Activated naive CD4-positive, alpha-beta T cell treated with anti-CD3 and anti-CD28 coated beads for 36 hours (primary cell): ENCODE measurements at regions of chr7 and their contacts with region 1.

Region 1: DNA sequence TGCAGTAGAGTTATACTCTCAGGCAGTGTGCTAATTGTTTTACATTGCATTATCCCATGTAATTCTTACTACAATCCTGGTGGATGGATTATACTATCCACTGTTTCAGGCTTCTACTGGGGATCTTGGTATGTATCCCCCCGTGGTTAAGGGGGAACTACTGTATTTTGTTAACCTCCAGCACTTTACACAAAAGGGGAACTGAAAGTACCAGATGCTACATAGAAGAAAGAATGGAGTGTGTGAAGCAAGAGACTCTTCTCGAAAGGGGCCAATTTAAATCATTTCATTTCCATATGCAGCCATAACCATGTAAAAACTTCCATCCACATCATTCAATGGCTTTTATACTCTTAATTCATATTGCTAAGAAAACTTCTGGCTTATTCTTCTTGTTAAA is 69.4 kb downstream of the C1GALT1 start:
- DNase-seq: no peak
- H3K4me3 Mint-ChIP-seq: no peak overlapping the region
- H3K27ac Mint-ChIP-seq: no peak overlapping the region
- H3K4me1 Mint-ChIP-seq: peaks cover 10% of the 10 kb centered on the region
- H3K27me3 Mint-ChIP-seq: no peaks in the 10 kb centered on the region

Region 2: GRCh38 chr7:7219216-7219615 is 32.5 kb before region 1 on chr7:
- CTCF ChIA-PET with region 1: interaction called, 3 read pairs
- intact Hi-C with region 1: loop called (anchors 5 kb)
- DNase-seq: no peak
- H3K4me3 Mint-ChIP-seq: no peak overlapping the region
- H3K27ac Mint-ChIP-seq: no peak overlapping the region
- H3K4me1 Mint-ChIP-seq: peaks cover 42% of the 10 kb centered on the region
- H3K27me3 Mint-ChIP-seq: no peaks in the 10 kb centered on the region

Region 3: GRCh38 chr7:7237978-7238267 is 13.8 kb before region 1 on chr7:
- CTCF ChIA-PET with region 1: interaction called, 4 read pairs
- intact Hi-C with region 1: loop called (anchors 2 kb)
- DNase-seq: no peak
- H3K4me3 Mint-ChIP-seq: no peak overlapping the region
- H3K27ac Mint-ChIP-seq: no peak overlapping the region
- H3K4me1 Mint-ChIP-seq: peaks cover 24% of the 10 kb centered on the region
- H3K27me3 Mint-ChIP-seq: no peaks in the 10 kb centered on the region

Region 4: GRCh38 chr7:8134089-8134733 is 882.5 kb after region 1 on chr7:
- CTCF ChIA-PET with region 1: no interaction called
- intact Hi-C with region 1: no loop called
- DNase-seq: peak; percentile 71
- H3K4me3 Mint-ChIP-seq: peak overlapping the region; percentile 33
- H3K27ac Mint-ChIP-seq: peak overlapping the region; percentile 68
- H3K4me1 Mint-ChIP-seq: peaks cover 52% of the 10 kb centered on the region
- H3K27me3 Mint-ChIP-seq: no peaks in the 10 kb centered on the region